ENCODE measurements at regions of chr3 and their contacts with region 1.

Region 1: GRCh38 chr3:58237238-58237940 is at the start of gene ABHD6:
- DNase-seq: peak; percentile 73 to 92 (median 83)
- ATAC-seq: peak; percentile 84
- H3K4me3 ChIP-seq: peak within 1 kb of the TSS; percentile 57 to 79
- H3K4me3 Mint-ChIP-seq: peak within 1 kb of the TSS; percentile 92
- H3K27ac ChIP-seq: peak within 1 kb of the TSS; percentile 38 to 49
- H3K27ac Mint-ChIP-seq: peak within 1 kb of the TSS; percentile 87
- H3K4me1 ChIP-seq: peaks cover 7% of the 10 kb centered on the region
- H3K4me1 Mint-ChIP-seq: peaks cover 17% of the 10 kb centered on the region
- H3K27me3 ChIP-seq: no peaks in the 10 kb centered on the region
- H3K27me3 Mint-ChIP-seq: peaks cover 14% of the 10 kb centered on the region
- CTCF ChIP-seq: no peak
- total RNA-seq, gene ABHD6: 1.9 to 2.1 TPM

Region 2: GRCh38 chr3:56566101-56566500 is 1671.3 kb before region 1 on chr3:
- CTCF ChIA-PET with region 1: no interaction called
- POLR2A ChIA-PET with region 1: no interaction called
- intact Hi-C with region 1: loop called in 1 of 2 experiments (anchors 10 kb)
- DNase-seq: no peak
- ATAC-seq: no peak
- H3K4me3 ChIP-seq: no peak overlapping the region
- H3K4me3 Mint-ChIP-seq: no peak overlapping the region
- H3K27ac ChIP-seq: no peak overlapping the region
- H3K27ac Mint-ChIP-seq: no peak overlapping the region
- H3K4me1 ChIP-seq: peaks cover 4% of the 10 kb centered on the region
- H3K4me1 Mint-ChIP-seq: peaks cover 20% of the 10 kb centered on the region
- H3K27me3 ChIP-seq: no peaks in the 10 kb centered on the region
- H3K27me3 Mint-ChIP-seq: no peaks in the 10 kb centered on the region
- CTCF ChIP-seq: no peak

Region 3: DNA sequence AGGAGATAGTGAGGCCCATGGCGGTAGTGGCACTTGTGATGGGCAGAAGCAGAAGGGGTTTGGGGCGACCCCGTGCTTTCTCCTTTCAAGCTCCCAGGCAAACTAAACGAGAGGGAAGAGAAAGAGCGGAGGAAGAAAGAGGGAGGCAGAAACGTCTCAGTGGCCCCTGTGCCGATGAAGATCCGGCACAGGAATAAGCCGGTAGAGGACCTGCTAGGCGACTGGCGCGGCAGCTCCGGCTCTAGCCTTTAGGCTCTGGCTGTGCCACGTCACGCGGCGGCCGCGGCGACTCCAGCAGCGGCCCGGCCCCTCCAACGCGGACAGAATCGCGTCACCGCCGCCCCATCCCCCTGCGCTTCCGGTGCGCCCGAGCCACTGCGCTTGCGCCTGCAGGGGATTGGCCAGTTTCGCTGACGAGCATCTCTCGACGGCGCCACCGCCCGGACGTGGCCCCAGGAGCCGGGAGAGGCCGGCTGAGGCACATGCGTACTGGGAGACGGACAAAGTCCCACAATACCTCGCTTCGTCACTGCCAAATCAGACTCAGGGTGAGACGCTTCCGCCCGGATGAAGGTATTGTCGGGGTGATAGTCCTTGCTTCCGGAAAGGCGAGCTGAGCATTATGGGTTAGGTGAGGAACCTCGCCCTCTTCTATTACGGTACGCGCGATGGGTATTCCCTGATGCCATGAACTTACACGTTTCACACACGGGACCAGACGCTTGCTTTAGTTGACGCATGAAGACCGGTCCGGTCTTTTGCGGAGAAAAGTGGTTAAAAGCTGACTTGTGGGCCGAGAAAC is 640.1 kb before region 1 on chr3 and contains the start of gene ARF4:
- CTCF ChIA-PET with region 1: no interaction called
- POLR2A ChIA-PET with region 1: no interaction called
- intact Hi-C with region 1: loop called in 1 of 2 experiments (anchors 5 kb)
- DNase-seq: peak; percentile 98 to 100 (median 99)
- ATAC-seq: peak; percentile 87
- H3K4me3 ChIP-seq: peak within 1 kb of the TSS; percentile 92 to 95
- H3K4me3 Mint-ChIP-seq: peak within 1 kb of the TSS; percentile 99
- H3K27ac ChIP-seq: peak within 1 kb of the TSS; percentile 93 to 95
- H3K27ac Mint-ChIP-seq: peak within 1 kb of the TSS; percentile 100
- H3K4me1 ChIP-seq: peaks cover 42% of the 10 kb centered on the region
- H3K4me1 Mint-ChIP-seq: peaks cover 58% of the 10 kb centered on the region
- H3K27me3 ChIP-seq: no peaks in the 10 kb centered on the region
- H3K27me3 Mint-ChIP-seq: no peaks in the 10 kb centered on the region
- CTCF ChIP-seq: no peak
- total RNA-seq, gene ARF4: 72.7 to 73.5 TPM

Region 4: DNA sequence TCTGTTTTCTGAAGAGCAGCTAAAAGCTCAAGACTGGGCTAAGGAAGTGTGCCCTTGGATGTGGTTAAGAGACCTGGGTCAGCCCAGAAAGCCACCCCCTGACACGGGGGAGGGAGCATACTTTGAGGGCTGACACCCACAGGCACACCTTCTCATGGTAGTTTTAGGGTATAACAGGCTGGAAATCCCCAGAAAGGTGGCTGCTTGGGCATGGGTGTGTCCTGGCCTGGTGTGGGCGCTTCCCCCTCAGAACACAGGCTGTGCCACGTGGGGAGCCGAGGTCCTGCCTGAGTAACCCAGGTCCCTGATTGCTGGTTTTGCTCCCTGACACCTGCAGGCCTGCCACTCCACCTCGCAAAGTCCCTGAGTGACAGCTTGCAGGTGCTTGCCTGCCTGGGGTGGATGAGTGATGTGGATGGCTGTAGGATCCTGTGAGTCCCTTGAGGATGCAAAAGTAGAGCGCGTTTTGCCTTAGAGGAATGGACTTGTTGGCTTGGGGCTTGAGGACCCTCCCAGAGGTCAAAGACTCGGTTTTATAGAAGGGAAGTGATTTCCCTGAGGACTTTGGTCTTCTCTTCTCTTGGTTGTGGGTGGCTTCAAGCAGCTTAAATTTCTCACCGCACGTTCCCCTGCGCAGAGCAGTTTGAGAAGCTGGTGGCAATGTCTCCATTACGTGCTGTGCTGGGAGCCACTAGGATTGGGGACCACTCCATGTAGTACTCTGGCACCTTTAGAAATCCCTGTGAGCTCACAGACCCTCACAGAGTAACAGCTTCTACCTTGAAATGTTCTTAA is 121.0 kb before region 1 on chr3:
- CTCF ChIA-PET with region 1: no interaction called
- POLR2A ChIA-PET with region 1: no interaction called
- intact Hi-C with region 1: loop called in 1 of 2 experiments (anchors 5 kb)
- DNase-seq: peak; percentile 29 to 92 (median 67)
- ATAC-seq: peak; percentile 94
- H3K4me3 ChIP-seq: no peak overlapping the region
- H3K4me3 Mint-ChIP-seq: peak overlapping the region; percentile 54
- H3K27ac ChIP-seq: peak overlapping the region; percentile 1 to 42
- H3K27ac Mint-ChIP-seq: peak overlapping the region; percentile 89
- H3K4me1 ChIP-seq: peaks cover 28% of the 10 kb centered on the region
- H3K4me1 Mint-ChIP-seq: peaks cover 44% of the 10 kb centered on the region
- H3K27me3 ChIP-seq: no peaks in the 10 kb centered on the region
- H3K27me3 Mint-ChIP-seq: no peaks in the 10 kb centered on the region
- CTCF ChIP-seq: no peak

Region 5: DNA sequence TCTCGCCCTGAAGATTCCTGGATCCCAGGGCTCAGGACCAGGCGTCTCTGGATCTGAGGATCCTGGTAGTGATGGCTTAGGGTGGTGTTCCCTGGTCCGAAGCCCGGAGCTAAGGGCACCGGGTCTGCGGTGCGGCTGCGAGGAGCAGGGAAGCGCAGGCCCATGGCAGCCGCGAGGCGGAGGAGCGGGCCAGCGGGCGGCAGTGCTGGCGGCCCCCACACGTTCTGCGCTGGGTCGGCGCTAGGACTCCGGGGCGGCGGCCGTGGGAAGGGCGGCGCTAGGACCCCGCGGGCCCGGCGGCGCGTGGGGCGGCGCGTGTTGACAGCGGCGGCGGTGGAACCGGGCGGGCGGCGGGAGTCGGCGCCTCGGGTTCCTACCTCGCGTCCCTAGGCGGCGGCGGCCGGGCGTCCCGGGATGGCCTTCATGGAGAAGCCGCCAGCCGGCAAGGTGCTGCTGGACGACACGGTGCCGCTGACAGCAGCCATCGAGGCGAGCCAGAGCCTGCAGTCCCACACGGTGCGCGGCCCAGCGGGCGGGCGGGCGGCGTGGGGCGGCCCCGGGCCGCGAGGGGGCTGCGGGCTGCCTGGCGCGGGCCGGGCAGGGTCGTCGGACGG is 95.3 kb after region 1 on chr3 and contains the start of gene PXK:
- CTCF ChIA-PET with region 1: no interaction called
- POLR2A ChIA-PET with region 1: no interaction called
- intact Hi-C with region 1: loop called (anchors 1 kb)
- DNase-seq: peak; percentile 62 to 86 (median 76)
- ATAC-seq: peak; percentile 90
- H3K4me3 ChIP-seq: peak within 1 kb of the TSS; percentile 71 to 78
- H3K4me3 Mint-ChIP-seq: peak within 1 kb of the TSS; percentile 100
- H3K27ac ChIP-seq: peak within 1 kb of the TSS in 1 of 2 experiments; percentile 25
- H3K27ac Mint-ChIP-seq: peak within 1 kb of the TSS; percentile 94
- H3K4me1 ChIP-seq: peaks cover 29% of the 10 kb centered on the region
- H3K4me1 Mint-ChIP-seq: peaks cover 30% of the 10 kb centered on the region
- H3K27me3 ChIP-seq: no peaks in the 10 kb centered on the region
- H3K27me3 Mint-ChIP-seq: no peaks in the 10 kb centered on the region
- CTCF ChIP-seq: no peak
- total RNA-seq, gene PXK: 14.9 to 15.0 TPM

Region 6: GRCh38 chr3:58433400-58434169 is 196.2 kb after region 1 on chr3 and contains the start of gene PDHB:
- CTCF ChIA-PET with region 1: interaction called, 3 read pairs
- POLR2A ChIA-PET with region 1: no interaction called
- intact Hi-C with region 1: loop called (anchors 1 to 5 kb)
- DNase-seq: peak; percentile 74 to 94 (median 88)
- ATAC-seq: peak; percentile 97
- H3K4me3 ChIP-seq: peak within 1 kb of the TSS; percentile 88 to 98
- H3K4me3 Mint-ChIP-seq: peak within 1 kb of the TSS; percentile 92
- H3K27ac ChIP-seq: peak within 1 kb of the TSS; percentile 86 to 87
- H3K27ac Mint-ChIP-seq: peak within 1 kb of the TSS; percentile 97
- H3K4me1 ChIP-seq: peaks cover 10% of the 10 kb centered on the region
- H3K4me1 Mint-ChIP-seq: peaks cover 25% of the 10 kb centered on the region
- H3K27me3 ChIP-seq: no peaks in the 10 kb centered on the region
- H3K27me3 Mint-ChIP-seq: no peaks in the 10 kb centered on the region
- CTCF ChIP-seq: no peak
- total RNA-seq, gene PDHB: 32.5 to 33.2 TPM

Region 7: DNA sequence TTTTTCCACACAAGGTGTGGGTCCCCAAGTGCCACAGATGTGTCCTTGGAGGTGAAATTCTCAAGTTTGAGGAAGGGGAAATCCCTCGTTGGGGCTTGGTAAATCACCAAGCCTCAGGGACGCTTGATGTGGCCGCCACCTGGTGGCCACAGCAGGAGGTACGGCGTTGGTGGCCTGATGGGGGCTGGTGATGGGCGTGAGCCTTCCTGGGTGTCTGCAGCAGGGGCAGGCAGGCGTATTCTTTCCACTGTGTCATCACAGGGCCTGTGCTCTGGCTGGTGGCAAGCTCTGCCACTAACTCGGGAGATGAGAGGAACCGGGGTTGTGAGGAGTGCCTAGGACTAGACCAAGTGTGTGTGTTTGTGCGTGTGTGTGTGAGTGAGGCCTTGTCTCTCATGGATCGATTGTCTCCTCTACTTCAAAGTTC is 295.4 kb after region 1 on chr3:
- CTCF ChIA-PET with region 1: no interaction called
- POLR2A ChIA-PET with region 1: no interaction called
- intact Hi-C with region 1: loop called in 1 of 2 experiments (anchors 5 kb)
- DNase-seq: peak; percentile 60 to 88 (median 75)
- ATAC-seq: peak; percentile 99
- H3K4me3 ChIP-seq: no peak overlapping the region
- H3K4me3 Mint-ChIP-seq: no peak overlapping the region
- H3K27ac ChIP-seq: no peak overlapping the region
- H3K27ac Mint-ChIP-seq: no peak overlapping the region
- H3K4me1 ChIP-seq: no peaks in the 10 kb centered on the region
- H3K4me1 Mint-ChIP-seq: peaks cover 7% of the 10 kb centered on the region
- H3K27me3 ChIP-seq: no peaks in the 10 kb centered on the region
- H3K27me3 Mint-ChIP-seq: no peaks in the 10 kb centered on the region
- CTCF ChIP-seq: peak; percentile 78